Naive thymus-derived CD4-positive, alpha-beta T cell (primary cell): ENCODE measurements at regions of chr10 and their contacts with region 1.

Region 1: GRCh38 chr10:105857268-105858264 is 1216.5 kb downstream of the SORCS3 start:
- DNase-seq: no peak
- ATAC-seq: no peak
- H3K4me3 ChIP-seq: no peak overlapping the region
- H3K4me3 Mint-ChIP-seq: peak overlapping the region in 2 of 10 donors; percentile 7 to 19
- H3K27ac ChIP-seq: peak overlapping the region; percentile 14
- H3K27ac Mint-ChIP-seq: peak overlapping the region in 6 of 9 donors; percentile 46 to 86 (median 66)
- H3K4me1 ChIP-seq: peaks cover 0 to 15% of the 10 kb centered on the region in 2 donors
- H3K4me1 Mint-ChIP-seq: peaks cover 0 to 32% (median 29%) of the 10 kb centered on the region in 7 donors
- H3K27me3 ChIP-seq: no peaks in the 10 kb centered on the region
- H3K27me3 Mint-ChIP-seq: no peaks in the 10 kb centered on the region

Region 2: GRCh38 chr10:105837951-105838350 is 19.6 kb before region 1 on chr10:
- CTCF ChIA-PET with region 1: no interaction called
- POLR2A ChIA-PET with region 1: no interaction called
- intact Hi-C with region 1: loop called (anchors 2 kb)
- DNase-seq: peak in 7 of 9 donors; percentile 2 to 64 (median 53)
- ATAC-seq: peak; percentile 91
- H3K4me3 ChIP-seq: peak overlapping the region; percentile 53
- H3K4me3 Mint-ChIP-seq: peak overlapping the region; percentile 63 to 90 (median 86)
- H3K27ac ChIP-seq: peak overlapping the region; percentile 60
- H3K27ac Mint-ChIP-seq: peak overlapping the region; percentile 56 to 90 (median 86)
- H3K4me1 ChIP-seq: peaks cover 0 to 15% of the 10 kb centered on the region in 2 donors
- H3K4me1 Mint-ChIP-seq: peaks cover 3 to 61% (median 40%) of the 10 kb centered on the region in 7 donors
- H3K27me3 ChIP-seq: no peaks in the 10 kb centered on the region
- H3K27me3 Mint-ChIP-seq: no peaks in the 10 kb centered on the region

Region 3: GRCh38 chr10:106053061-106053460 is 195.5 kb after region 1 on chr10:
- CTCF ChIA-PET with region 1: no interaction called
- POLR2A ChIA-PET with region 1: no interaction called
- intact Hi-C with region 1: no loop called
- DNase-seq: no peak
- ATAC-seq: no peak
- H3K4me3 ChIP-seq: no peak overlapping the region
- H3K4me3 Mint-ChIP-seq: no peak overlapping the region
- H3K27ac ChIP-seq: no peak overlapping the region
- H3K27ac Mint-ChIP-seq: no peak overlapping the region
- H3K4me1 ChIP-seq: no peaks in the 10 kb centered on the region
- H3K4me1 Mint-ChIP-seq: no peaks in the 10 kb centered on the region
- H3K27me3 ChIP-seq: no peaks in the 10 kb centered on the region
- H3K27me3 Mint-ChIP-seq: peaks cover 0 to 6% (median 0%) of the 10 kb centered on the region in 5 donors